ENCODE measurements at regions of chr1 and their contacts with region 1.

Region 1: DNA sequence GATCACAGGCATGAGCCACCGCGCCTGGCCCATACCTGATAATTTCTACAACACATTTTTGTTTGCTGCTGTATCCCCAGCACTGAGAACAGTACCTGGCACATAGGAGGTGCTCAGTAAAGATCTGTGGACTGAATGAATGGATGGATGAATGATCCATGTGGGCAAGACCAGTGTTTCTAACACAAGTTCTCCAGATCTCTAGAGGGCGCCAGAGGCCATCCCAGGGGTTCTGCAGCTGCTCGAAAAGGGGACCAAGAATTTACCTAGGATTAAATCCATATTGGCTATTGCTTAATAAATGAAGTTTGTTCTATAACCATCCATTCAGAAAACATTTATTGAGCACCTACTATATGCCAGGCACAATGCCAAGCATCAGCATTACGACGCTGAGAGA is 167.7 kb downstream of the ACTL8 start:
- DNase-seq: peak; percentile 15 to 75
- H3K4me3 ChIP-seq: no peak overlapping the region
- H3K27ac ChIP-seq: no peak overlapping the region
- H3K4me1 ChIP-seq: 0 out of 7 replicates have a peak, but pooled peaks cover 0 to 2% (median 0%) of the 10 kb centered on the region in 4 experiments
- H3K27me3 ChIP-seq: peaks cover 0 to 4% (median 0%) of the 10 kb centered on the region in 4 experiments; a peak in 2 of 7 replicates
- CTCF ChIP-seq: peak; percentile 68 to 87 (median 75)
- EP300 ChIP-seq: no peak
- POLR2A ChIP-seq: no peak
- RAD21 ChIP-seq: peak; percentile 95 to 96

Region 2: DNA sequence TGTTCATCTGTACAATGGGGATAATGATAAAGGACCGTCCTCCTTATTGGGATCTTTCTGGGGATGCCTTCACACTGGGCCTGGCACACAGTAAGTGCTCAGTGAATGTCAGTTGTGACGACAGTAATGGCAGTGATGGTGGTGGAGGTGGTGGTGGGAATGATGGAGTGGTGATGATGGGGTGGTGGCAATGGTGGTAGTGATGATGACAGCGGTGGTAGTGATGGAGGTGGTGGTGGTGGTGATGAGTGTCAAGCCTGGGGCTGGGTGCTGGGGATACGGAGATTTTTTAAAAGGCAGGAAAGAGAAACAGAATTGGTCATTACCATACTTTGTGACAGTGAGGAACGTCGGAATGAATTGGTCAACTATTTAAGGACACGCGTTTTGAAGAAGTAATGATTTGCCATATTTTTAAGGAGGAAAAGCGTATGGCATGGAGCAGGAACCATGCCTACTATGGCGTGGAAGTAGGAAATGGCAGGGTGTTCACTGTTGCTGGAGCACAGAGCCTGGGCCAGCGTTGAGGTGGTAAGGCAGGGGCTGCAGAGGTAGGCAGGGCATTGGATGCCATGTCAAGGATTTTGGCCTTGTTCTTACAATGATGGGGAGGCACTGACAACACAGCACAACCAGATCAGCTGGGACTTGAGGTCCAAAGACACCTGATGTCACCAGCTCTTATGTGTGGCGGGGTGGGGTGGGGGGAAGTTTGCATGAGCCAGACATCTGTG is 39.0 kb before region 1 on chr1:
- CTCF ChIA-PET with region 1: no interaction called
- POLR2A ChIA-PET with region 1: no interaction called
- DNase-seq: no peak
- H3K4me3 ChIP-seq: no peak overlapping the region
- H3K27ac ChIP-seq: no peak overlapping the region
- H3K4me1 ChIP-seq: peaks cover 0 to 2% (median 0%) of the 10 kb centered on the region in 4 experiments; a peak in 1 of 7 replicates
- H3K27me3 ChIP-seq: no peaks in the 10 kb centered on the region
- CTCF ChIP-seq: no peak
- EP300 ChIP-seq: no peak
- POLR2A ChIP-seq: no peak
- RAD21 ChIP-seq: no peak

Region 3: GRCh38 chr1:17933971-17934370 is 11.1 kb after region 1 on chr1:
- CTCF ChIA-PET with region 1: interaction called, 17 read pairs
- POLR2A ChIA-PET with region 1: no interaction called
- DNase-seq: no peak
- H3K4me3 ChIP-seq: no peak overlapping the region
- H3K27ac ChIP-seq: no peak overlapping the region
- H3K4me1 ChIP-seq: no peaks in the 10 kb centered on the region
- H3K27me3 ChIP-seq: peaks cover 0 to 4% (median 0%) of the 10 kb centered on the region in 4 experiments; a peak in 3 of 7 replicates
- CTCF ChIP-seq: no peak
- EP300 ChIP-seq: no peak
- POLR2A ChIP-seq: no peak
- RAD21 ChIP-seq: no peak

Region 4: DNA sequence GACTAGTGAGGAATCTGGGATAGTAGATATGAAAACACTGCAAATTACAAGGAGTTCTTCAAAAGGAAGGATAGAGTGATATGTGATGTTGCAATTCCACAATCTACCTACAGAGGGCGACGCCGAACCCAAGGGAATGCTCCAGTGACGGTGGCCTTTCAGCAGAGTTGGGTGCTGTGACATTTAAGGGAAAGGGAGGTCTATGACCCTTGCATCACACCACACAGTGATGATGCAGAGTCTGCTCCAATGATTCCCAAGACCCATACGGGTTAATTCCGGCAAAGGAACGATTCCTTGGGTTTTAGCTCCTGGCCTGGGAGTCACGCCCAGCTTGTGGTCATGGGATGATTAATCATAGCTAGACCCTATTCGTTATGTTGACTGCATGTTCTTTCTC is 61.8 kb after region 1 on chr1:
- CTCF ChIA-PET with region 1: interaction called, 12 read pairs
- POLR2A ChIA-PET with region 1: no interaction called
- DNase-seq: peak; percentile 27 to 86
- H3K4me3 ChIP-seq: no peak overlapping the region
- H3K27ac ChIP-seq: no peak overlapping the region
- H3K4me1 ChIP-seq: peaks cover 0 to 3% (median 0%) of the 10 kb centered on the region in 4 experiments; a peak in 2 of 7 replicates
- H3K27me3 ChIP-seq: peaks cover 0 to 2% (median 0%) of the 10 kb centered on the region in 4 experiments; a peak in 2 of 7 replicates
- CTCF ChIP-seq: peak; percentile 77 to 93 (median 83)
- EP300 ChIP-seq: no peak
- POLR2A ChIP-seq: no peak
- RAD21 ChIP-seq: peak; percentile 79 to 82

Region 5: GRCh38 chr1:18085387-18086074 is 162.7 kb after region 1 on chr1:
- CTCF ChIA-PET with region 1: interaction called, 10 read pairs
- POLR2A ChIA-PET with region 1: no interaction called
- DNase-seq: no peak
- H3K4me3 ChIP-seq: no peak overlapping the region
- H3K27ac ChIP-seq: no peak overlapping the region
- H3K4me1 ChIP-seq: peaks cover 0 to 6% (median 3%) of the 10 kb centered on the region in 4 experiments; a peak in 5 of 7 replicates
- H3K27me3 ChIP-seq: no peaks in the 10 kb centered on the region; a peak in 1 of 7 replicates
- CTCF ChIP-seq: no peak
- EP300 ChIP-seq: no peak
- POLR2A ChIP-seq: no peak
- RAD21 ChIP-seq: no peak

Region 6: DNA sequence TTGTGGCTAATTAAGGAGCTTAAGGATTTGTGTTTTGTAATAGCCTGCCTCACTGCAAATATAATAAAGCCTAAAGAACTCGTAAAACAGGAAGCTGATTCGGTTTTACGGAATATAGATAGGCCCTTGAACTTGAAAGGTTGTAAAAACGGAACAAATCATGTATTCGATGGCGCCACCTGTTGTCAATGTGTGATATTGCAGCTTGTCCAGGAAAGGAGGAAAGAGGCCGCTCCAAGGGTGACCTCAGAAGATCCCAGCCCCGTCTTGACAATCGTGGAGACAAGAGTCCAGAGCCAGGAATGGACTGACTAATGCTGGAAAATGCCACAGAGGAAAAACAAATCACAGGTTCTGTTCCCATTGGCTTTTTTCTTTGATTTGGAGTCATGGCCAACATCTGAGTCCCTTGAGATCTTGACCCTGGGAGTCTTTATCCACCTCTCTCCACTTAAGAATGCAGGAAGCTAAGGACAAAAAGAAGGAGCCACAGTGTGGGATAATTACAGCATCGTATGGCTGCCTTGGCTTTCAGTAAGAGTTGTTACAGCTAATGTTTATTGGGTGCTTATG is 177.7 kb after region 1 on chr1:
- CTCF ChIA-PET with region 1: interaction called, 20 read pairs
- POLR2A ChIA-PET with region 1: interaction called, 3 read pairs
- DNase-seq: peak in 1 of 2 experiments; percentile 85
- H3K4me3 ChIP-seq: no peak overlapping the region
- H3K27ac ChIP-seq: no peak overlapping the region
- H3K4me1 ChIP-seq: peaks cover 0 to 5% (median 0%) of the 10 kb centered on the region in 4 experiments; a peak in 1 of 7 replicates
- H3K27me3 ChIP-seq: peaks cover 0 to 18% (median 4%) of the 10 kb centered on the region in 4 experiments; a peak in 4 of 7 replicates
- CTCF ChIP-seq: peak; percentile 55 to 84 (median 70)
- EP300 ChIP-seq: no peak
- POLR2A ChIP-seq: no peak
- RAD21 ChIP-seq: peak; percentile 79 to 87

Region 7: DNA sequence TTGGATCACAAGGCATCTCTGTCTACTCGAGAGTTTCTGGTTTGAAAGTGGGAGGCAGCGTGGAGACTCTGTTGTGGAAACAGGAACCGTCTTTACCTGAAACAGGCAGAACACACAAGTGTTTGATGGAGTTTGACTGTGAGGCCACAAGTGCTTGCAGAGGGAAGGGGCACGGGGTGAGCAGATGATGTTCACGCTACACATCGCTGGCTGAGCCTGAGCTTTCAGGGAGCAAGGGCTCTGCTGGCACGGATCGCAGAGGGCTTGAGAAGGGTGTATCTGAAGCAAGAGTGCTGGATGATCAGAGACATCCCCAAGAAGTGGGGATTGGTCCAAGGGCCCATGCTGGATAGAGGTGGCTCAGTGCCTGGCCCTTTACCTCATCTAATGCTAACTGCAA is 244.1 kb after region 1 on chr1:
- CTCF ChIA-PET with region 1: no interaction called
- POLR2A ChIA-PET with region 1: no interaction called
- DNase-seq: no peak
- H3K4me3 ChIP-seq: no peak overlapping the region
- H3K27ac ChIP-seq: no peak overlapping the region
- H3K4me1 ChIP-seq: peaks cover 0 to 5% (median 2%) of the 10 kb centered on the region in 4 experiments; a peak in 4 of 7 replicates
- H3K27me3 ChIP-seq: no peaks in the 10 kb centered on the region
- CTCF ChIP-seq: no peak
- EP300 ChIP-seq: no peak
- POLR2A ChIP-seq: no peak
- RAD21 ChIP-seq: no peak

Region 8: GRCh38 chr1:18264450-18265039 is 341.7 kb after region 1 on chr1:
- CTCF ChIA-PET with region 1: no interaction called
- POLR2A ChIA-PET with region 1: no interaction called
- DNase-seq: no peak
- H3K4me3 ChIP-seq: no peak overlapping the region
- H3K27ac ChIP-seq: no peak overlapping the region
- H3K4me1 ChIP-seq: peaks cover 4 to 18% (median 12%) of the 10 kb centered on the region in 4 experiments
- H3K27me3 ChIP-seq: no peaks in the 10 kb centered on the region
- CTCF ChIP-seq: no peak
- EP300 ChIP-seq: no peak
- POLR2A ChIP-seq: peak in 1 of 2 experiments; percentile 87; a peak in 2 of 3 replicates
- RAD21 ChIP-seq: no peak

Region 9: DNA sequence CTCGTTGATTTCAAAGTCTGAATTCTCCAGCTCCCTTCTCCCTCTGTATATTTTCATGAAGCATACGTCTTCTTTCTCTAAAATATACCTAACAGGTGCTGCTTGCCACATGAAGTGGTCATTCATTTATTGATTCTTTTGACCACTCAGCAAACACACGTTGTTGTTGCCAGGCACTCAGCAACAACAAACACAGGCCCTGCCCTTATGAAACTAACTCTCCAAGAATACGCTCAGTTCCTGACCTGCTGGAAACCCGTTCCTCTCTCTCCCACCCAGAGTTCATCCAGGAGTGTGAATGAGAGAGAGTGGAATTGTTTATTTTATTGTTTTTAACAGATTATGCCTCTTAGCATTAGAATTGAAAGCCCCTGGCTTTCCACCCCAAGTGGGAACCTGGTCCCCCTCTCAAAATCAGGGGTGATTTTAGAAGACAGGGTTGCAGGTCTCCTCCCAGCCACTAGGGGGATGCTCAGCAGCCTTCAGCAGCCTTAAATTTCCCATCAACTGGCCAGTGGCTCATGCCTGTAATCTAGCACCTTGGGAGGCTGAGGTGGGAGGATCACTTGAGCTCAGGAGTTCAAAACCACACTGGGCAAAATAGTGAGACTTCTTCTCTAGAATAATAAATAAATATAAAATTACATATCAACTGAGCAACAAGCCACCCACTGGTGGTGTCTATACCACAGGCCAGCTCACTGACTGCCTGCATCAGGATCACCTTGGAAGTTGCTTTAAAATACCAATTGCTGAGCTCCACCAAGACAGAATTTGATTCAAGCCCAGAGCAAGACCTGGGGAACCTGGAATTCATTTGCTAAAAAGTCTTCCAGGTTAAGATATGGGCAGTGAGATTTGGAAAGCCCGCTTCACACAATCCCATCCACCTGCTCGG is 376.9 kb after region 1 on chr1:
- CTCF ChIA-PET with region 1: interaction called, 12 read pairs
- POLR2A ChIA-PET with region 1: no interaction called
- DNase-seq: peak in 1 of 2 experiments; percentile 62
- H3K4me3 ChIP-seq: no peak overlapping the region
- H3K27ac ChIP-seq: peak overlapping the region; percentile 18; the same call in 1 of the 2 replicates
- H3K4me1 ChIP-seq: peaks cover 17 to 36% (median 18%) of the 10 kb centered on the region in 4 experiments
- H3K27me3 ChIP-seq: no peaks in the 10 kb centered on the region
- CTCF ChIP-seq: peak; percentile 75 to 86 (median 84)
- EP300 ChIP-seq: no peak
- POLR2A ChIP-seq: no peak
- RAD21 ChIP-seq: peak; percentile 53 to 71

Region 10: GRCh38 chr1:18581420-18581880 is 658.6 kb after region 1 on chr1:
- CTCF ChIA-PET with region 1: interaction called, 24 read pairs
- POLR2A ChIA-PET with region 1: no interaction called
- DNase-seq: peak in 1 of 2 experiments; percentile 93
- H3K4me3 ChIP-seq: no peak overlapping the region
- H3K27ac ChIP-seq: no peak overlapping the region
- H3K4me1 ChIP-seq: no peaks in the 10 kb centered on the region; a peak in 1 of 7 replicates
- H3K27me3 ChIP-seq: peaks cover 0 to 2% (median 0%) of the 10 kb centered on the region in 4 experiments; a peak in 3 of 7 replicates
- CTCF ChIP-seq: peak; percentile 94 to 100 (median 96)
- EP300 ChIP-seq: no peak
- POLR2A ChIP-seq: no peak
- RAD21 ChIP-seq: peak; percentile 98 to 99